ENCODE measurements at regions of chr15 and their contacts with region 1.

Region 1: GRCh38 chr15:94119923-94120775 is 111.2 kb upstream of the MCTP2 start:
- DNase-seq: peak; percentile 86
- H3K4me3 ChIP-seq: no peak overlapping the region
- CTCF ChIP-seq: peak; percentile 97

Region 2: GRCh38 chr15:93997084-93997918 is 122.8 kb before region 1 on chr15:
- in situ Hi-C with region 1: loop called (anchors 5 kb)
- DNase-seq: peak; percentile 18
- H3K4me3 ChIP-seq: no peak overlapping the region
- CTCF ChIP-seq: peak; percentile 85

Region 3: GRCh38 chr15:94154245-94154644 is 34.1 kb after region 1 on chr15:
- in situ Hi-C with region 1: no loop called
- DNase-seq: no peak
- H3K4me3 ChIP-seq: no peak overlapping the region
- CTCF ChIP-seq: no peak

Region 4: GRCh38 chr15:94263341-94264273 is 143.5 kb after region 1 on chr15:
- in situ Hi-C with region 1: no loop called
- DNase-seq: no peak
- H3K4me3 ChIP-seq: no peak overlapping the region
- CTCF ChIP-seq: no peak